Heart left ventricle (tissue), 16 donors: ENCODE measurements at regions of chr5 and their contacts with region 1.

Region 1: GRCh38 chr5:88785391-88786219 is 97.4 kb downstream of the MEF2C start:
- DNase-seq: peak in 2 of 5 donors; percentile 53 to 61
- ATAC-seq: peak; percentile 91 to 96 (median 94)
- H3K4me3 ChIP-seq: peak overlapping the region in 9 of 12 donors; percentile 8 to 35 (median 20)
- H3K27ac ChIP-seq: peak overlapping the region; percentile 14 to 88 (median 82)
- H3K4me1 ChIP-seq: peaks cover 4 to 56% (median 37%) of the 10 kb centered on the region in 12 donors
- H3K27me3 ChIP-seq: no peaks in the 10 kb centered on the region
- CTCF ChIP-seq: no peak
- POLR2A ChIP-seq: no peak

Region 2: DNA sequence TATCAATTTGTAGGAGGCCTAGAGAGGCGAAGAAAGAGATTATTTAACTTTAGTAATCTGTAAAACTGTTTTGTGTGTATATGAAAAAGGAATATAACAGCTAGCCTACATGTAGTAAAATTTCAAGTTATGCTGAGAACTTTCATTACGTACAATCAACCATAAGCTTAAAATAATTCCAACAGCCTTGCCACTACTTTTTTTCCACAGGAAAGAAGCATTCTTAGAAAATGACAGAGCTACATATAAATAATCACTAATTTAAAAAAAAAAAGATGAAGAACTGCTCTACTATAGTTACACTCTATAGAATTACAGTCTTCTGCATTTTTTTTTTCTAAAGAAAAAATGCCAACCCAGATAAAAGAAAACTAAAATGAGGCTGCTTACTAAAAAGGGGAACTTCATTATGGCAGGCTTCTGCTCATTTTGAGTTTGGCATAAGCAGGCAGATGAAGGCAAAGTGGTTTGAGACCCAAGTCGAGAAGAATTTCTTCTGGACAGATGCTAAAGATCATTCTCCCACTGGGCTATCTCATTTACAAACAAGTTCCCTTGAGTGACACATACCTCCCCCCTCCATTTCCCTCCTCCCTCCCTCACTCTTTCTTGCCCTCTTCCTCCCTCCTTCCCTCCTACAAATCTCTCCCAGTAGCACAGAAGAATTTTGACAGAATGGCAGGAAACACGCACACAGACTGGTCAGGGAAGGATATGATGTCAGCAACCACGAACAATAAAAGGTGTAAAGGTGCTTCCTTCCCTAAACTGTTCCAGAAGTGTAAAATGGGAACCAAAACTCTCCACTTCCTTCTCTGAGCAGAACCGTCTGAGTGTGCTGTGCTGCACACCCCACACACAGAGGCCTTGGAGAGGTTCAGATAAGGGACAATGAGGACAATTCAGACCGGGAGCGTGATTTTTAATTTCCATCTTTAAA is 41.3 kb after region 1 on chr5:
- intact Hi-C with region 1: loop called in 6 of 10 experiments (anchors 5 kb)
- DNase-seq: peak in 4 of 5 donors; percentile 48 to 78 (median 58)
- ATAC-seq: peak; percentile 80 to 94 (median 88)
- H3K4me3 ChIP-seq: peak overlapping the region in 9 of 12 donors; percentile 4 to 34 (median 19)
- H3K27ac ChIP-seq: peak overlapping the region; percentile 62 to 88 (median 82)
- H3K4me1 ChIP-seq: peaks cover 9 to 92% (median 73%) of the 10 kb centered on the region in 12 donors
- H3K27me3 ChIP-seq: no peaks in the 10 kb centered on the region
- CTCF ChIP-seq: no peak
- POLR2A ChIP-seq: peak in 1 of 2 donors; percentile 57

Region 3: GRCh38 chr5:88833371-88834130 is 47.9 kb after region 1 on chr5:
- intact Hi-C with region 1: loop called in 5 of 10 experiments (anchors 5 kb)
- DNase-seq: peak in 4 of 5 donors; percentile 61 to 79 (median 72)
- ATAC-seq: peak; percentile 63 to 86 (median 78)
- H3K4me3 ChIP-seq: peak overlapping the region in 9 of 12 donors; percentile 21 to 41 (median 35)
- H3K27ac ChIP-seq: peak overlapping the region; percentile 56 to 93 (median 87)
- H3K4me1 ChIP-seq: peaks cover 11 to 97% (median 75%) of the 10 kb centered on the region in 12 donors
- H3K27me3 ChIP-seq: no peaks in the 10 kb centered on the region
- CTCF ChIP-seq: peak in 2 of 12 donors; percentile 23 to 24
- POLR2A ChIP-seq: no peak

Region 4: DNA sequence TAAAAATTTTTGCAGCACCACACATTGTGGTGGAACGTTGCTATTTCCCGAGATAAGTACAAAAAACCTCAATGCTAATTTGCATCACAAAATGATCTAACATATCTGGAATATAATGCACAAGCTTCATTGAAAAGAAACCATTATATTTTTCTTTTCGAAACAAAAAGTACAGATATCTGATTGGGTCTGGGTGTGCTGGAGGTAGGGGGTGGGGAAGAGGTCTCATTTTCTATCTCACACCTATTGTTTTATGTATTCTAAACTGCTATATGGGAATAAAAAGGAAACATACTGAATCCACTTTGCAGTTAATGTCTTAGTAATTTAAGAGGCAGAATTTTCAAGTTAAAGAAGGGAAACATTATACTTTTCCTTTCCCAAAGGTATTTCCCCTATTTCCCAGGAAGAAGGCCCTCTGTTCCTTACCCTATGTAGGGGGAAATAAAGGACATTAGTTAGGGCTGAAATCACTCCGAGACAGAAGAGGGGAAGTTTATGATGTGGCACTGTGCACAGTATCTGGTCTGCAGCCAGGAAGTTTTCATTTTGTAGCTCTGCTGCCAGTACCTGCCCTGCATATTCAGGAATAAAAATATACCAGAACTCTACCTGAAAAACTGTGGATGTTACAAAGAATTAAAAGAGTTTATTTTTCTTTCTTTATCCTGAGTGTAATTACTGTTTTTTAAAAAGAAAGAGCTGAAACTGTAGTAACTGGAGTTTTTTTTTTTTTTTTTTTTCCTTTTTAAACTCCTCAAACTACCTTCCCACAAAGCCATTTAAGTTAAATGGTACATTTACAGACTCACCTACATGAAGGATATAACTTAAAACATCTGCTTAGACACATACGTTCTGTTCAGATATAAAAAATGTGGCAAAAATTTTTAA is 90.0 kb after region 1 on chr5:
- intact Hi-C with region 1: loop called in 5 of 10 experiments (anchors 5 to 10 kb)
- DNase-seq: no peak
- ATAC-seq: peak in 3 of 4 donors; percentile 59 to 68 (median 66)
- H3K4me3 ChIP-seq: peak overlapping the region in 9 of 12 donors; percentile 3 to 74 (median 22)
- H3K27ac ChIP-seq: peak overlapping the region in 10 of 12 donors; percentile 8 to 93 (median 56)
- H3K4me1 ChIP-seq: peaks cover 1 to 75% (median 45%) of the 10 kb centered on the region in 12 donors
- H3K27me3 ChIP-seq: no peaks in the 10 kb centered on the region
- CTCF ChIP-seq: no peak
- POLR2A ChIP-seq: no peak